ENCODE measurements at regions of chr22 and their contacts with region 1.

Region 1: GRCh38 chr22:37752466-37753087 is 55.2 kb upstream of the GCAT start:
- DNase-seq: peak; percentile 100
- H3K4me3 ChIP-seq: no peak overlapping the region
- H3K27ac ChIP-seq: peak overlapping the region; percentile 95
- H3K4me1 ChIP-seq: peaks cover 74% of the 10 kb centered on the region
- H3K27me3 ChIP-seq: no peaks in the 10 kb centered on the region
- CTCF ChIP-seq: no peak; the same call in 1 of the 2 replicates

Region 2: DNA sequence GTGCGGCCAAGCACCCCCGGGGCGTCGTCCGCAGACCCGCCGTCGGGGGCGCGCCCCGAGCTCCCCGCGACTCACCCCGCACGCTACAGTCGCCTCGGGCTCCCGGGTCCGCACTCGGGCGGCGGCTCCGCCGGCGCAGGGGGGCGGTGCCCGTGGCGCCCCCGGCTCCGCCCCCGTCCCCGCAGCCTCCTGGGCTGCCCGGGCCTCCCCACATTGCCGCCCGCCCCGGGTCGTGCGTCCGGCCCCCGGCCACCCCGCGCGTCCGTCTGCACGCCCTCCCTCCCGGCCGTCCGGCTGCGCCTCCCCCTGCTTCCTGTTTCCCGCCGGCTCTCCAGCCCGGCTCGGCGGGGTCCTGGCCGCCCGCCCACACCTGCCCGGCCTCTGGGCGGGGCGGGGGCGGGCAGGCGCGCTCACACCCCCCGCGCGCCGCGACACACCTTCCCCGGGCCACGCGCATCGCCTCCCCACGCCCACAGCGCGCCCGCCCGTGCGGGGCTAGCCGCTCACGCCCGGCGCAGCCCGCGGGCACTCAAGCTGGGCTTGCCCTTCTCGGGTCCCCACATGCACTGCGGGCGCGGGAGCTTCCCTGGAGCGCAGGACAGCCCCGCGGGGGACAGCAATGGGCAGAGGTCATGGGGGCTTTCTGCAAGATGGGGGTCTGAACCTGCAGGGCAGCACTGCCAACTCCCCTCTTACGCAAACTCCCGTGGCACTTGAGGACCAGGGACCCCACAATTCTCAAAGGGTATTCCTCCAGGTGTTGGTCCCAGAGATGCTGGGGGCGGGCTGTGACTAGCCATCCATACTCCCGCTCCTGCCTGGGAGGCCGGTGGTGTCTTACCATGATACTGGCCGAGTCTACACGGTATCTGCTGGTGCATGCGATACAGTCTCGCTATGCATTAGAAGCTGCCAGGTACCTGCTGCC is 233.0 kb before region 1 on chr22 and contains the start of gene CARD10:
- CTCF ChIA-PET with region 1: no interaction called
- POLR2A ChIA-PET with region 1: no interaction called
- intact Hi-C with region 1: loop called (anchors 5 kb)
- DNase-seq: peak in 1 of 2 experiments; percentile 74
- H3K4me3 ChIP-seq: peak within 1 kb of the TSS; percentile 76
- H3K27ac ChIP-seq: no peak within 1 kb of the TSS
- H3K4me1 ChIP-seq: peaks cover 19% of the 10 kb centered on the region
- H3K27me3 ChIP-seq: no peaks in the 10 kb centered on the region
- CTCF ChIP-seq: no peak
- total RNA-seq, gene CARD10: 63.9 and 76.7 TPM in 2 replicates

Region 3: DNA sequence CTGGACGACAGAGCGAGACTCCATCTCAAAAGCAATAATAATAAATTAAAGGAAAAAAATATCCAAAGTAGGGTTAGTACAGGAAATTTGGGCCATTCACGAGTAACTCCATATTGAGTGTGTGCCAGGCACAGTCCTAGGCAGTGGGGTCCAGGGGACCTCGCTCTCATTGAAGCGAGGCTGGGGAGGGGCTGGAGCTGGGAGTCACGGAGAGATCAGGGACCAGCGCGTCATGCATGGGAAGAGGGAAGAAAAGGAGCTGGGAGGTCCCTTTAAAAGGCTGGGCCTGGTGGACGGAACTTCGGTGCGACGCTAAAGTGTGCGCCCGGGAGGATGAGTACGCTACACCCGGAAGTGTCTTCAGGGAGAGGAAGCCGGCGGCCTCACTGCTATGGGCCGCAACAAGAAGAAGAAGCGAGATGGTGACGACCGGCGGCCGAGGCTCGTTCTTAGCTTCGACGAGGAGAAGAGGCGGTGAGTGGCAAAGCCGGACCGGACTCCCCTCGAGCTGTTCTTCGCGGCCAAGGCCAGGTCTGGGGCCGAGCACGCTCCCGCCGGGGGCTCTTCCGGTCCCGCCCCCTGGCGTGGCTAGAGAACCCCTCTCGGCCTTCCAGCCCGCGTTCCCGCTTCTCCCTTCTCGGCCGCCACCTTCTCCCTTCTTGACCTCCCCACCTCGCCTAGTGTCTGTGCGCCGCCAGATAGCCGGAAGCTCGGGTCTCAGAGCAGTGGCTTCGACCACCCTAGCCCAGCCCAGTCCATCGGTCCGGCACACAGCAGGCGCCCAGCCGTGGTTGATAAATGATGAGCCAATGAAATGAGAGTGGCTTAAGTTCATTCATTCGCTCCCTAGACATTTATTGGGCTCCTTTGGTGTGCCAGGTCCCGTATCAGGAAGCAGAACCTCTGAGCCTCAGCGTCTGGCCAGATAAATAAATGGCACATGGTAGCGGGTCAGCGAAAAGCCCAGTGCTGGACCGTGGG is 66.3 kb before region 1 on chr22 and contains the start of gene NOL12:
- CTCF ChIA-PET with region 1: no interaction called
- POLR2A ChIA-PET with region 1: interaction called, 3 read pairs
- intact Hi-C with region 1: loop called (anchors 2 kb)
- DNase-seq: peak; percentile 83 to 86
- H3K4me3 ChIP-seq: peak within 1 kb of the TSS; percentile 94
- H3K27ac ChIP-seq: peak within 1 kb of the TSS; percentile 59
- H3K4me1 ChIP-seq: peaks cover 47% of the 10 kb centered on the region
- H3K27me3 ChIP-seq: no peaks in the 10 kb centered on the region
- CTCF ChIP-seq: 0 out of 2 replicates have a peak, but pooled peaks have one; percentile 26
- total RNA-seq, gene NOL12: 42.1 and 44.3 TPM in 2 replicates

Region 4: DNA sequence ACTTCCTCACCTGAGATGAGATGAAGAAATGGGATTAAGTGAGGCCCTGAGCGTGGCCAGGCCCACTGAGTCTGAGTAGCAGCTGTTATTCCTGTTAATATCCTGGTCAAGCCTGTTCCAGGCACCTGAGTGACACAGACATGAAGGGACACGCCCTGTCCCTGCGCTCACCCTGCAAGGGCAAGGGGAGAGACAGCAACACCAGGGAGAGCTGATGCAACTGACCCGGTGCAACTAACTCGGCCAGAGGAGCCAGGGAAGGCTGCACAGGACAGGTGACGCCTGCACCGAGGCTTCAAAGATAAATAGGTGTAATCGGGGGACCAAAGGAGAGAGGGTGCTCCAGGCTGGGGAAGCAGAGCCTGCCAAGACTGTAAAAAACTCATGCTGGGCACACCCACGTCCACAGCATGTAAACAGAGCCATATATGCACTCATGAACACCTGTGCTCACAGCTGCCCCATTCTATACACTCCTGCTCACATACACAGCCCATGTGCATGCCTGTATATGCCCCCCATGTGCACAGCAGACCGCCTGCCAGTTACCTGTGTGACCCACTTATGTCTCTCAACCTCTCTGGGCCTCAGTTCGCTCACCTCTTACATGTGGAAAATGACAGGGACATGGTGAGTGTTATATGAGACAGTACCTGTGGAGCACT is 32.4 kb after region 1 on chr22:
- CTCF ChIA-PET with region 1: no interaction called
- POLR2A ChIA-PET with region 1: interaction called, 6 read pairs
- intact Hi-C with region 1: loop called (anchors 2 kb)
- DNase-seq: peak; percentile 88 to 97
- H3K4me3 ChIP-seq: no peak overlapping the region
- H3K27ac ChIP-seq: peak overlapping the region; percentile 74
- H3K4me1 ChIP-seq: peaks cover 49% of the 10 kb centered on the region
- H3K27me3 ChIP-seq: no peaks in the 10 kb centered on the region
- CTCF ChIP-seq: no peak

Region 5: DNA sequence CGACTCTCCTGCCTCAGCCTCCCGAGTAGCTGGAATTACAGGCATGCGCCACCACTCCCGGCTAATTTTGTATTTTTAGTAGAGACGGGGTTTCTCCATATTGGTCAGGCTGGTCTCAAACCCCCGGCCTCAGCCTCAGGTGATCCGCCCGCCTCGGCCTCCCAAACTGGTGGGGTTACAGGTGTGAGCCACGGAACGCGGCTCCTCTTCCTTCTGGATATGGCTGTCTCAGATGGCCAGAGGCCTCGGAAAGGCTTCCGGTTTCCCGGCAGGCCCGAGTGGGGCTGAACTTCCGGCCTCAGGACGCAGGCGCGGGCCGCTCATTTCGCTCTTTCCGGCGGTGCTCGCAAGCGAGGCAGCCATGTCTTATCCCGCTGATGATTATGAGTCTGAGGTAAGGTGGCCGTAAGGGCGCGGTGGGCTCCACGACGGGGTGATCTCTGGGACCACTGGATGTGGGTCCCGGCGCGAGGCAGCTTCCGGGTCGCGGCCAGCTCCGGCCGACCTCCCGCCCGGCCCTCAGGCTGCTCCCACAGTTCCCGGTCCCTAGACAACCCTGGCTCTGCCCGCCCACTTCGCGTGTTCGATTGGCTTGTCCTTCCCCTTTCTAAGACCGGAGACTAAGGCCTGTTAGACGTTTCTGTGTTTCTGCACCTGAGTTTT is 96.6 kb after region 1 on chr22 and contains the start of gene EIF3L:
- CTCF ChIA-PET with region 1: interaction called, 11 read pairs
- POLR2A ChIA-PET with region 1: no interaction called
- intact Hi-C with region 1: loop called (anchors 2 kb)
- DNase-seq: peak; percentile 91 to 92
- H3K4me3 ChIP-seq: peak within 1 kb of the TSS; percentile 89
- H3K27ac ChIP-seq: peak within 1 kb of the TSS; percentile 94
- H3K4me1 ChIP-seq: peaks cover 21% of the 10 kb centered on the region
- H3K27me3 ChIP-seq: no peaks in the 10 kb centered on the region
- CTCF ChIP-seq: no peak
- total RNA-seq, gene EIF3L: 566 and 582 TPM in 2 replicates

Measured in PC-9 (cell line).